ENCODE measurements at regions of chr5 and their contacts with region 1.

Region 1: DNA sequence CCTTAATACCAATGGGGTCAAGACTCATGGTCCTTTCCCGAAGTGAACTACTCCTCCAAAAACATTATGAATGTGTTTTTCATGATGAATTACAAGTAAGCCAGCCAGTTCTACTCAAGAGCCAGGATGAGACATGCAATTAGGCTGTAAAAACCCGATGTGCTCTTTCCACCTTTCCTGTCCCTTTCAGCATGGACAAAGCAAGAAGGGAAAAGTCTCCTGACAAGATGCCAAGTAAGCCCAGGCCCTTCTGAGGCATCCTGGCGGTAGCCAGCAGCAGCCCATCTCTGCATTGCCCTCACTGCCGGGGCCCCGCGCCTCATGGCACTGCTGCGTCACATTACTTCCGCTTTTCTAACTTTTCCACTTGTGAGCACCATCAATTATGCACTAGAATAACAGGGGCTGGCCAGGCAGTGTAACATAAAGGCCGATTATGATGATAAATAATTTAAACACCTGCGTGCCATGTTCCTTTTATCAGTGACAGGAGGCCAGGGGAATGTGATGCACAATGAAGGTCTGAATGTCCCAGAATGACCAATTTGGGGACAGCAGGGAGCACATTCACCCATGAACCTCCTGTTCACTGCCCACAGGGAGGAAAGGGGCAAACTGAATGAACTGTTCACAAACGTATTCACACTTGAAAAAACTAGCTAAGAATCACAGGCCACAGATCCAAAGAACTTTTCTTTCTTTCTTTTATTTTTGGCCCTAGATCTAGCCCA is 37.4 kb downstream of the EFNA5 start:
- DNase-seq: no peak
- ATAC-seq: no peak
- H3K4me3 ChIP-seq: no peak overlapping the region
- H3K4me3 Mint-ChIP-seq: no peak overlapping the region
- H3K27ac ChIP-seq: no peak overlapping the region
- H3K27ac Mint-ChIP-seq: no peak overlapping the region
- H3K4me1 ChIP-seq: no peaks in the 10 kb centered on the region
- H3K4me1 Mint-ChIP-seq: no peaks in the 10 kb centered on the region
- H3K27me3 ChIP-seq: no peaks in the 10 kb centered on the region
- H3K27me3 Mint-ChIP-seq: peaks cover 15% of the 10 kb centered on the region
- CTCF ChIP-seq: no peak

Region 2: DNA sequence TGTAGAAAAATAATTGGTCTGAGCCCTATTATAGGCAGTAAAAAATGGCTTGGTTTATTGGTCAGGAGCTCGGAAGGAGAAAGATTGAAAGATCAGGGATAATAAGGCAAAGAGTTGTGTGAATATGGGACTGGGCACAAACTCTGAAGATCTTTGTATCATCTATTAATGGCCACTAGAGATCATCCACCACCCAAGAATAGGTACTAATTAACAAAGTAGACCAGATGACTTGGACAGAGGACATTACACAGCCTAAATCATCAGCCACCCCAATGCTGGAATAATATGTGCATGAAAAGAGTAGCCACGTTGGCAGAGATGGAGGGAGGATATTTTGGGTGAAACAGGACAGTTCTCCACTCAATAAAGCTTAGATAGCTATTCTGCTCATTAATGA is 326.7 kb before region 1 on chr5:
- CTCF ChIA-PET with region 1: no interaction called
- POLR2A ChIA-PET with region 1: no interaction called
- intact Hi-C with region 1: no loop called
- DNase-seq: no peak
- ATAC-seq: no peak
- H3K4me3 ChIP-seq: no peak overlapping the region
- H3K4me3 Mint-ChIP-seq: no peak overlapping the region
- H3K27ac ChIP-seq: no peak overlapping the region
- H3K27ac Mint-ChIP-seq: no peak overlapping the region
- H3K4me1 ChIP-seq: no peaks in the 10 kb centered on the region
- H3K4me1 Mint-ChIP-seq: no peaks in the 10 kb centered on the region
- H3K27me3 ChIP-seq: no peaks in the 10 kb centered on the region
- H3K27me3 Mint-ChIP-seq: no peaks in the 10 kb centered on the region
- CTCF ChIP-seq: no peak

Region 3: GRCh38 chr5:107578051-107578635 is 55.2 kb before region 1 on chr5:
- CTCF ChIA-PET with region 1: no interaction called
- POLR2A ChIA-PET with region 1: no interaction called
- intact Hi-C with region 1: loop called in 1 of 2 experiments (anchors 2 kb)
- DNase-seq: no peak
- ATAC-seq: no peak
- H3K4me3 ChIP-seq: no peak overlapping the region
- H3K4me3 Mint-ChIP-seq: no peak overlapping the region
- H3K27ac ChIP-seq: no peak overlapping the region
- H3K27ac Mint-ChIP-seq: no peak overlapping the region
- H3K4me1 ChIP-seq: no peaks in the 10 kb centered on the region
- H3K4me1 Mint-ChIP-seq: no peaks in the 10 kb centered on the region
- H3K27me3 ChIP-seq: no peaks in the 10 kb centered on the region
- H3K27me3 Mint-ChIP-seq: peaks cover 18% of the 10 kb centered on the region
- CTCF ChIP-seq: no peak

Measured in CD4-positive, alpha-beta T cell (primary cell).